Ovary (tissue), 10 donors: ENCODE measurements at regions of chr3 and their contacts with region 1.

Region 1: DNA sequence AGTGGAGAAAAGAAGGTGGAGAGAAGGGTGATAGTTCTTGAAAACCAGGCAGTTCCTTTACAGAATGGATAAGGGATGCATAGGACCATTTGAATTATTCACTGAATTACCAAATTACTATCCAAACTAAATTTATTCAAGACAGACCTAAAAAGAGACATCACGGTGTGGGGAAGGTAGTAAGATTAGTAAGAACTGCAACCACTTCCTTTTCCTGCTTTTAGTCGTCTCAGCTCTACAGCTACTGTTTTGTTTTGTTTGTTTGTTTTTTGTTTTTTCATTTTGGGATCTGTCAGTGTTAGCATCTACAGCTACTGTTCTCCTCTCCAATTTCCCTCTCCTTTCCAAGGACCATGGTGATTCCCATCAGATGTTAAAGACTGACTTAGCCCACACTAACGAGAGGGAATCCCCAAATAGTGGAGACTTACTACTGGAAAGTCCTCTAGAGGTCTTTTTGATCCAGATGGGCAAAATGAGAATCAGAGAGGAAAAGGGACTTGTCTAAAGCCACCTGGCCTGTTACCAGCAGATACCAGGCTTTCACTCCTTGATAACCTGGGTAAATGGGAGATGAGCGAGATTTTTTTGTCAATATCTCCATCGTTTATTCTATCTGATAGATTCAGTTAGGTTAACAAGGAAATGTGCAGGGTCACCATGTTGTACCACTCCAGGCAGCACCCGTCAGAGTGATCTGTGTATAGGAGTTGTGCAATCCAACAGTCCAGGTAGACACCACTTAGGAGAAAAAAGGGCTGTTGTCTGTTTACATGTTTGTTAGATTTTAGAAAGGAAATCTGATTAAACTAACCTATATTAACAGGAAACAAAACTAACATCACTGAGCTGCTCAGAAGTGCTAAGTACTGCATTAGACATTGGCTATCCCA is 6.0 kb downstream of the HCLS1 start:
- DNase-seq: no peak
- H3K4me3 ChIP-seq: no peak overlapping the region
- H3K27ac ChIP-seq: no peak overlapping the region
- H3K4me1 ChIP-seq: no peaks in the 10 kb centered on the region
- H3K27me3 ChIP-seq: no peaks in the 10 kb centered on the region
- CTCF ChIP-seq: no peak
- EP300 ChIP-seq: no peak
- POLR2A ChIP-seq: no peak

Region 2: GRCh38 chr3:120147072-120147871 is 1507.5 kb before region 1 on chr3:
- intact Hi-C with region 1: loop called in 1 of 4 experiments (anchors 5 kb)
- DNase-seq: no peak
- H3K4me3 ChIP-seq: no peak overlapping the region
- H3K27ac ChIP-seq: no peak overlapping the region
- H3K4me1 ChIP-seq: no peaks in the 10 kb centered on the region
- H3K27me3 ChIP-seq: no peaks in the 10 kb centered on the region
- CTCF ChIP-seq: no peak
- EP300 ChIP-seq: no peak
- POLR2A ChIP-seq: no peak

Region 3: DNA sequence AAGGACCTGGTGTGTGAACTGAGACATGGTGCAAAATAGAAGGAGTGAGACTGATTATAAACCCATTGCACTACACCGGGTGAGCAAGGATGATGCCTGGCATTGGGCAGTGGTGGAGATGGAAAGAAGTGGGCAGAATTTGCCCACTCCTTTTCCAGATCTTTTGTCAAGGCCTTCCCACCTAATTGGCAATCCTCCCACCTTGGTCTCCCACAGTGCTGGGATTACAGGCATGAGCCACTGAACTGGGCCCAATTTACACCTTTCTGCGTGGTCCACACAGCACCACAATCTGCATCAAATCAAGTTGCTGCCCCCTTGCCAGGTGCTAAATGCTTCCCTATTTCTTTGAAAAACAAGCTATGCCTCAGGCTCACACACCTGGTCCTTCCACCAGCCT is 56.2 kb before region 1 on chr3:
- intact Hi-C with region 1: loop called in 1 of 4 experiments (anchors 2 kb)
- DNase-seq: no peak
- H3K4me3 ChIP-seq: no peak overlapping the region
- H3K27ac ChIP-seq: no peak overlapping the region
- H3K4me1 ChIP-seq: peaks cover 1% of the 10 kb centered on the region
- H3K27me3 ChIP-seq: no peaks in the 10 kb centered on the region
- CTCF ChIP-seq: no peak
- EP300 ChIP-seq: no peak
- POLR2A ChIP-seq: no peak

Region 4: DNA sequence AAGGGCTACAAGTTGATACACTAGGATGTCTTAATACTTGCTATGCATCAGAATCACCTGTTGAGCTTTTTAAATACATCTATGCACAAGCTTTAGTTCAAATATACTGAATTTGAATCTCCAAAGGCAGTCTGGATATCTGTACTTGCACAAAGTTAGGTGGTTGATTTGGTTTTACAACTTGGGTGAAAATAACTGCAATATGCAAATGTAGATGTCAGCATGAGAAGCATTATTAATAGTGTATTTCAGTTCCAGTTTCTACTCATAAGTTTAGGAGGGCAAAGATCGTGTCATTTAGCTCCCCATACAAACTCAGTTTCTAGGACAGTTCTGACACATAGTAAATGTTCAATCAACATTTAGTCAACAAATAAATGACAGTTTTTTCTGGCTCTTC is 154.5 kb after region 1 on chr3:
- intact Hi-C with region 1: no loop called
- DNase-seq: no peak
- H3K4me3 ChIP-seq: no peak overlapping the region
- H3K27ac ChIP-seq: no peak overlapping the region
- H3K4me1 ChIP-seq: no peaks in the 10 kb centered on the region
- H3K27me3 ChIP-seq: no peaks in the 10 kb centered on the region
- CTCF ChIP-seq: no peak
- EP300 ChIP-seq: no peak
- POLR2A ChIP-seq: no peak